IMR-90 (cell line): ENCODE measurements at regions of chr6 and their contacts with region 1.

Region 1: GRCh38 chr6:41735427-41736356 is at the start of gene TFEB:
- DNase-seq: peak; percentile 85
- ATAC-seq: peak; percentile 75
- H3K4me3 ChIP-seq: peak within 1 kb of the TSS; percentile 88
- H3K27ac ChIP-seq: peak within 1 kb of the TSS; percentile 70
- H3K4me1 ChIP-seq: peaks cover 13% of the 10 kb centered on the region
- H3K27me3 ChIP-seq: peaks cover 2% of the 10 kb centered on the region; the same call in 1 of the 2 replicates
- CTCF ChIP-seq: peak; percentile 99
- POLR2A ChIP-seq: no peak
- RAD21 ChIP-seq: peak; percentile 63
- total RNA-seq, gene TFEB: 4.4 and 4.5 TPM in 2 replicates

Region 2: GRCh38 chr6:41568585-41569384 is 166.9 kb before region 1 on chr6:
- CTCF ChIA-PET with region 1: no interaction called
- POLR2A ChIA-PET with region 1: no interaction called
- dilution Hi-C with region 1: no loop called
- in situ Hi-C with region 1: no loop called
- intact Hi-C with region 1: no loop called
- DNase-seq: peak; percentile 49
- ATAC-seq: peak; percentile 92
- H3K4me3 ChIP-seq: no peak overlapping the region
- H3K27ac ChIP-seq: no peak overlapping the region
- H3K4me1 ChIP-seq: peaks cover 10% of the 10 kb centered on the region; the same call in 1 of the 2 replicates
- H3K27me3 ChIP-seq: no peaks in the 10 kb centered on the region
- CTCF ChIP-seq: no peak
- POLR2A ChIP-seq: no peak
- RAD21 ChIP-seq: no peak

Region 3: GRCh38 chr6:41705996-41706835 is 29.5 kb before region 1 on chr6:
- CTCF ChIA-PET with region 1: no interaction called
- POLR2A ChIA-PET with region 1: no interaction called
- dilution Hi-C with region 1: no loop called
- in situ Hi-C with region 1: no loop called
- intact Hi-C with region 1: loop called (anchors 2 kb)
- DNase-seq: peak; percentile 68
- ATAC-seq: peak; percentile 91
- H3K4me3 ChIP-seq: no peak overlapping the region
- H3K27ac ChIP-seq: peak overlapping the region; percentile 30; the same call in 1 of the 2 replicates
- H3K4me1 ChIP-seq: peaks cover 15% of the 10 kb centered on the region
- H3K27me3 ChIP-seq: no peaks in the 10 kb centered on the region
- CTCF ChIP-seq: peak; percentile 64
- POLR2A ChIP-seq: no peak
- RAD21 ChIP-seq: peak; percentile 57

Region 4: GRCh38 chr6:41747256-41748101 is 11.8 kb after region 1 on chr6 and contains the start of gene PGC:
- CTCF ChIA-PET with region 1: no interaction called
- POLR2A ChIA-PET with region 1: no interaction called
- dilution Hi-C with region 1: no loop called
- in situ Hi-C with region 1: no loop called
- intact Hi-C with region 1: no loop called
- DNase-seq: no peak
- ATAC-seq: no peak
- H3K4me3 ChIP-seq: no peak within 1 kb of the TSS
- H3K27ac ChIP-seq: no peak within 1 kb of the TSS
- H3K4me1 ChIP-seq: no peaks in the 10 kb centered on the region
- H3K27me3 ChIP-seq: peaks cover 13% of the 10 kb centered on the region
- CTCF ChIP-seq: no peak
- POLR2A ChIP-seq: no peak
- RAD21 ChIP-seq: no peak
- total RNA-seq, gene PGC: not detected in 2 replicates

Region 5: DNA sequence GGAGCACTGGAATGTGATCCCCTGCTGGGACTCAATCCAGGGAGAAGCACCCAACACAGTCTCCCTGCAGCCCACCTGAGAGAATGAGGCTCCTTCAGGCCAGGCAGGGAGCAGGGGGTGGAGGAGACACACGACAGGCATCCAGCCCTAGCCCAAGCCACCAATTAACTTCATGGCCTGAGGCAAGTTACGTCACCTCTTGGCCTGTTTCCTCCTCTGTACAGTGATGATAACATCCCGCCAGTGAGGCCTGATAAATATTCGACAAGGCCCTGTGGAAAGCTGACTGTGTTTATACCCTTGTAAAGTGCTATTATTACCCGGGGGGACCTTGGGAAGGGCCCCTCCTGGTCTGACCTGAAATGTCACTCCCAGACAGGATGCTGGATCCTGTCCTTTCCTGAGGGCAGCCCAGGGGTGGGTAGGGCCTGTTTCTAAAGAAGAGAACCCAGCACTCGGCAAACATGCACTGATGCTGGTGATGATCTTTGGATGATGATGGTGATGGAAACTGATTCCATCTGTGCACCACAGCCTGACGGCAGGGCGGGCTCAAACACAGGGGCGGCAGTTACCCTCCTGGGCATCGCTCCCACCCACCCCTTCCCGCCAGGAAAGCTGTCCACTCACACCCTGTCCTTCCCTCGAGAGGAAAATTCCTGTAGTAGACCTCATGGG is 31.6 kb after region 1 on chr6:
- CTCF ChIA-PET with region 1: interaction called, 3 read pairs
- POLR2A ChIA-PET with region 1: no interaction called
- dilution Hi-C with region 1: no loop called
- in situ Hi-C with region 1: no loop called
- intact Hi-C with region 1: loop called (anchors 2 kb)
- DNase-seq: peak; percentile 87
- ATAC-seq: peak; percentile 96
- H3K4me3 ChIP-seq: no peak overlapping the region
- H3K27ac ChIP-seq: peak overlapping the region; percentile 46; the same call in 1 of the 2 replicates
- H3K4me1 ChIP-seq: peaks cover 5% of the 10 kb centered on the region; the same call in 1 of the 2 replicates
- H3K27me3 ChIP-seq: no peaks in the 10 kb centered on the region
- CTCF ChIP-seq: no peak
- POLR2A ChIP-seq: no peak
- RAD21 ChIP-seq: no peak

Region 6: DNA sequence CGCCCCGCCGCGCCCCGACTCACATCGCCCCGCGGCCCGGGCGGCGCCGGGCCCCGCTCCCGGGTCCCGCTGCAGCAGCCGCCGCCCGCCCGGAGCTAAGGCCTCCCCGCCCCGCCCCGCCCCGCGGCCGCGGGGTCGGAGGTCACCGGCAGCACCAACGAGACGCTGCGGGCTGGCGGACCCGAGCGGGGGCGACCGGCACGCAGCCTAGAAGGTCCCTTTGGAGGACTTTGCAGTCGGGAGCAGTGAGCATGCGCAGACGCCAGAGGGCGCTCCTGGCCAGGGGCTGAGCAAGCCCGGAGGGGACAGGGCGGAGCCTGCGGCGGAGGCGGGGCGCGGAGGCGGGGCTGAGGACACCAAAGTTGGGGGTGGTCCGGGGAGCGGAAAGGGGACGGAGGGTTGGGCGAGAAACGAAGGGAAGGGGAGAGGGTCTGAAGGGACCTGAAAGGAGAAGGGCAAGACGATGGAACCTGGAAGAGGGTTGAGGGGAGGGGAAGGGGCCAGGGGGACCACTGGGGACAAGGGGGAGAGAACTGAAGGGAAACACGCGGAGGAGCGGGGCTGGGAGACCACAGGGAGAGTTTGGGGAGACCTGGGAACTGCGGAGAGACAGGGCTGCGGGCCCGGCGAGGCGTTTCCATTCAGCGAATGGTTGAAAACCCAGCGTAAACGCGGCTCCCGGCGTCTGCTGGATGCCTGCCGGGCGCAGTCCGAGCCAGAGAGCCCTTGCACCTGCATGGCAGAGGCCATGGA is 44.3 kb after region 1 on chr6 and contains the start of gene FRS3:
- CTCF ChIA-PET with region 1: no interaction called
- POLR2A ChIA-PET with region 1: interaction called, 12 read pairs
- dilution Hi-C with region 1: no loop called
- in situ Hi-C with region 1: no loop called
- intact Hi-C with region 1: loop called (anchors 1 kb)
- DNase-seq: peak; percentile 92
- ATAC-seq: peak; percentile 95
- H3K4me3 ChIP-seq: peak within 1 kb of the TSS; percentile 54
- H3K27ac ChIP-seq: peak within 1 kb of the TSS; percentile 38
- H3K4me1 ChIP-seq: peaks cover 9% of the 10 kb centered on the region
- H3K27me3 ChIP-seq: no peaks in the 10 kb centered on the region
- CTCF ChIP-seq: peak; percentile 97
- POLR2A ChIP-seq: no peak
- RAD21 ChIP-seq: peak; percentile 94
- total RNA-seq, gene FRS3: 0.28 and 0.54 TPM in 2 replicates

Region 7: GRCh38 chr6:41801380-41801779 is 65.7 kb after region 1 on chr6:
- CTCF ChIA-PET with region 1: no interaction called
- POLR2A ChIA-PET with region 1: no interaction called
- dilution Hi-C with region 1: no loop called
- in situ Hi-C with region 1: no loop called
- intact Hi-C with region 1: no loop called
- DNase-seq: peak; percentile 38
- ATAC-seq: peak; percentile 70
- H3K4me3 ChIP-seq: no peak overlapping the region
- H3K27ac ChIP-seq: no peak overlapping the region
- H3K4me1 ChIP-seq: no peaks in the 10 kb centered on the region; the same call in 1 of the 2 replicates
- H3K27me3 ChIP-seq: no peaks in the 10 kb centered on the region
- CTCF ChIP-seq: peak; percentile 68
- POLR2A ChIP-seq: no peak
- RAD21 ChIP-seq: peak; percentile 71

Region 8: GRCh38 chr6:42050266-42051032 is 314.8 kb after region 1 on chr6 and contains the start of gene TAF8:
- CTCF ChIA-PET with region 1: no interaction called
- POLR2A ChIA-PET with region 1: no interaction called
- dilution Hi-C with region 1: no loop called
- in situ Hi-C with region 1: no loop called
- intact Hi-C with region 1: no loop called
- DNase-seq: peak; percentile 92
- ATAC-seq: peak; percentile 92
- H3K4me3 ChIP-seq: peak within 1 kb of the TSS; percentile 97
- H3K27ac ChIP-seq: peak within 1 kb of the TSS; percentile 99
- H3K4me1 ChIP-seq: peaks cover 15% of the 10 kb centered on the region
- H3K27me3 ChIP-seq: no peaks in the 10 kb centered on the region; the same call in 1 of the 2 replicates
- CTCF ChIP-seq: no peak
- POLR2A ChIP-seq: peak; percentile 98
- RAD21 ChIP-seq: no peak
- total RNA-seq, gene TAF8: 19.7 and 22.8 TPM in 2 replicates